A673 (cell line): ENCODE measurements at regions of chr6 and their contacts with region 1.

Region 1: DNA sequence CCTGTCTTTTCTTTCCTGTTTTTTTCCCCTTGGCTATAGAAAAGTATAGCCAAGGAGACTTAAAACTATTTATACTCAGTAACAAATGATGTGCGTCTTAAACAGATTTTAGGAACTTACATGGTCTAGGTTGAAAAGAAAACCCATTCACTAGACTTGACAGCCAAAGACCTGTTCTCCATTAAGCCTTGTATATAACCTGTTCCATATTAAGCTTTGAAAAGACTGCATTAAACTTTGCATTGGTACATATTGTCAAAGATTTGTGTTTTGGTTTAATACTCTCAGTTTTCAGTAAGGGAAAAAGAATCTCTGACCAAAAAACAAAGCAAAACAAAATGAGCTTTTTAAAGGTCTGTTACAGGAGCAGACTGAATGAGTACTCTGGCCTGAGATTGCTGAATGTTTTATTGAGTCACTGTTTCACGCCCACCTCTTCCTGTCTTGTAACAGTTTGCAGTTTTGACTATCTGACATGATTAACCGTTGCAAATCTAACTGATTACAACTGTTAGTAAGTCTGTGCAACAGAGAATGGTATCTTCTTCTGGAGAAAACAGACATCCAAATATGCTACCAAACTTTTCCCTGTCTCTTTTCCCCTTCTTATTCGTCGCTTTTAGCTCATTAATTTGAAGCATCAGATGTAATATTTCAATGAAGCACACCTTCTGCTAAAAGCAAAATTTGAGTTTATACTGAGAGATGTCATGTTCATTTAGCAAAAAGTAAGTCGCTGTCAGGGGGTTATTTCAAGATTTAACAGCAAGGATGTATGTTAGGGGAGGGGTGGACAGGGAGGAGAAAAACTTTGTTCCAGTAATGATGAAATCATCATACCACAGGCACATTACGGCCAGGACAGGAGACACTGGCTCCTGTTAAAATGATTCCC is 59.1 kb upstream of the SUPT3H start:
- DNase-seq: peak; percentile 93
- H3K4me3 ChIP-seq: peak overlapping the region; percentile 13
- H3K27ac ChIP-seq: peak overlapping the region; percentile 79
- H3K4me1 ChIP-seq: peaks cover 84% of the 10 kb centered on the region
- H3K27me3 ChIP-seq: no peaks in the 10 kb centered on the region
- CTCF ChIP-seq: no peak

Region 2: DNA sequence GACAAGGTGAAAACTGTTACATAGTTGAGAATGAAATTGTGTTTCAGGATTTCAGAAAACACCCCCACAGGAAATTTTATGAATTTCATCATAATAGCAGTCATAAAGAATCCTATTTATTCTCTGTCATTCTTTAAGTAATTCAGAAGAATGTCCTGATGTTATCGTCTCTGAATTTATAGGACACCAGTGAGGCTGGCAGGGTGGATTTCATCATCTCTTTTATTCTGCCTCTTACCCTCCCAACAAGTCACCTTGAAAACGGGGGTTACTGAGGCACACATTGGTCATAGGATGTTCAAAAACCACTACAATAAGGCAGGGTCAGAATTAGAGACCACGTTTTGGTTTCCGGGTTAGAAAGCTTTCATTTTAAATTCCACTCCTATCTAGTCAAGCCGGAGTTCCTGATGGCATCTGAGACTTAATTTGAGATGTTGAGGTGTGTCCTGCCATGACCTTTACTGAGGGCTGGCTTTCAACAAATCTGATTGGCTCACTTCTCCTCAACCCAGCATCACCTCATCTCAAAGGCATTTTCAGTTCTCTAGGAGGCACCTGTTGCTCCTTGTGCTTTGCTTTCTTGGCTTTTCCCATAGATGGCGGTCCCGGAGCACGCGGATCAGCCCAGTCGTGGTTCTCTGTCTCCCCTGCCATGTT is 171.6 kb after region 1 on chr6:
- CTCF ChIA-PET with region 1: no interaction called
- POLR2A ChIA-PET with region 1: no interaction called
- intact Hi-C with region 1: loop called (anchors 10 kb)
- DNase-seq: peak; percentile 51
- H3K4me3 ChIP-seq: no peak overlapping the region
- H3K27ac ChIP-seq: peak overlapping the region; percentile 53
- H3K4me1 ChIP-seq: peaks cover 31% of the 10 kb centered on the region
- H3K27me3 ChIP-seq: no peaks in the 10 kb centered on the region
- CTCF ChIP-seq: no peak

Region 3: GRCh38 chr6:45922728-45923351 is 486.0 kb after region 1 on chr6:
- CTCF ChIA-PET with region 1: no interaction called
- POLR2A ChIA-PET with region 1: no interaction called
- intact Hi-C with region 1: loop called (anchors 10 kb)
- DNase-seq: peak; percentile 66
- H3K4me3 ChIP-seq: no peak overlapping the region
- H3K27ac ChIP-seq: no peak overlapping the region
- H3K4me1 ChIP-seq: no peaks in the 10 kb centered on the region
- H3K27me3 ChIP-seq: no peaks in the 10 kb centered on the region
- CTCF ChIP-seq: peak; percentile 76